Endothelial cell of umbilical vein (primary cell): ENCODE measurements at regions of chr7 and their contacts with region 1.

Region 1: DNA sequence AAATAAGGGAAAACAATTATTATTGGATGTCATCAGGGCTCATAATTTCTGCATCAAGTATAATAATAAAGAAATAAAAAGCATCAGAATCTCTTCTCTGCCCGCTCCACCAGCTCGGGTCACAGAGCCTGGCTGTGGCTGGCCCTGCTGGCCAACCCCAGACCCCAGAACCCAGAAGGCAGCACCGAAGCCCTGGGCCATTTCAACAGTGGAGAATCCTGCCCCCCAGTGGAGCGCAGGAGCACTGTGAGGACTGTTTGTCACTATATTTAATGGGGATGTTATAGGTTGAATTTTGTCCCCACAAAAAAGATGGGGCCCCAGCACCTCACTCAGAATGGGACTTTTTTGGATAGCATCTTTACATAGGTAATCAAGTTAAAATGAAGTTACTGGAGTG is 27.3 kb downstream of the DENND11 start:
- DNase-seq: no peak
- H3K4me3 ChIP-seq: peak overlapping the region in 1 of 3 experiments; percentile 34
- H3K27ac ChIP-seq: peak overlapping the region; percentile 99
- H3K4me1 ChIP-seq: peaks cover 32% of the 10 kb centered on the region
- H3K27me3 ChIP-seq: no peaks in the 10 kb centered on the region
- CTCF ChIP-seq: peak; percentile 66 to 70
- POLR2A ChIP-seq: no peak

Region 2: GRCh38 chr7:140049339-140050024 is 1625.2 kb before region 1 on chr7:
- CTCF ChIA-PET with region 1: no interaction called
- POLR2A ChIA-PET with region 1: no interaction called
- dilution Hi-C with region 1: no loop called
- intact Hi-C with region 1: loop called (anchors 10 kb)
- DNase-seq: peak; percentile 88
- H3K4me3 ChIP-seq: no peak overlapping the region
- H3K27ac ChIP-seq: peak overlapping the region; percentile 72
- H3K4me1 ChIP-seq: peaks cover 24% of the 10 kb centered on the region
- H3K27me3 ChIP-seq: no peaks in the 10 kb centered on the region
- CTCF ChIP-seq: no peak
- POLR2A ChIP-seq: no peak

Region 3: DNA sequence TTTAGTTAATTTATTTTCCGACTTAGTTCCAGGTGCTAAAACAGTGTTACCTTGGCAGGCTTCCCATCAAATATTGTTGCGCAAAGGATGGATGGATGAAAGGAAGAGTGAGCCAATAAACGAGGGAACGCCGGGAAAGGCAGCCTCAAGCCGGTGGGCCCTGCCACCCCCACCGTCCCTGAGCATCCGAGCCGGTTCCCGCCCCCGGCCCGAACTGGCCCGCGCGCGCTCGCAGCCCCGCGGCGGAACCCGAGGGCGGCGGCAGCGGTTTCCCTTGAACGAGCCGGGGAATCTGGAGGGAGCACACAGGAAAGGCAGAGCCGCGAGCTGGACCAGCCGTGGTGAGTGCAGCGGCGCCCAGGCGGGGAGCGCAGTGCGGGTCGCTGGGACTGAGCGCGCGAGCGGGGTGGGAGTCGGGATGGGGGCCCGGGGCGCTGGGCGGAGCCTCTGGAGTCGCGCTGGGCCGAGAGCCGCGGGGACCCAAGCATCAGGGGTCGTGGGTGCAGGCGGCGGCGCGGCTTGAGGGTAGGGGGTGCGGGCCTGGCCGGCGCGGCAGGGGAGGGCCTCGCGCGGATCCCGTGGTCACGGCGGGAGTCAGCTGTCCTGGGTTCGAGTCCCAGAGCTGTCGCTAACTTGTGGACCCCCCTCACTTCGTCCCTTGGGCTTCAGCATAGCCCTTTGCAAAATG is 123.5 kb before region 1 on chr7 and contains the start of gene AGK:
- CTCF ChIA-PET with region 1: interaction called, 3 read pairs
- POLR2A ChIA-PET with region 1: no interaction called
- dilution Hi-C with region 1: no loop called
- intact Hi-C with region 1: loop called (anchors 1 kb)
- DNase-seq: peak; percentile 75
- H3K4me3 ChIP-seq: peak within 1 kb of the TSS; percentile 60 to 97 (median 82)
- H3K27ac ChIP-seq: peak within 1 kb of the TSS; percentile 38
- H3K4me1 ChIP-seq: peaks cover 13% of the 10 kb centered on the region
- H3K27me3 ChIP-seq: no peaks in the 10 kb centered on the region
- CTCF ChIP-seq: no peak
- POLR2A ChIP-seq: peak; percentile 79
- total RNA-seq, gene AGK: 33.9 and 34.3 TPM in 2 replicates

Region 4: GRCh38 chr7:141663081-141663849 is 11.4 kb before region 1 on chr7:
- CTCF ChIA-PET with region 1: interaction called, 16 read pairs
- POLR2A ChIA-PET with region 1: no interaction called
- dilution Hi-C with region 1: no loop called
- intact Hi-C with region 1: loop called (anchors 1 kb)
- DNase-seq: peak; percentile 90
- H3K4me3 ChIP-seq: no peak overlapping the region
- H3K27ac ChIP-seq: peak overlapping the region; percentile 76
- H3K4me1 ChIP-seq: peaks cover 24% of the 10 kb centered on the region
- H3K27me3 ChIP-seq: no peaks in the 10 kb centered on the region
- CTCF ChIP-seq: no peak
- POLR2A ChIP-seq: peak; percentile 17

Region 5: DNA sequence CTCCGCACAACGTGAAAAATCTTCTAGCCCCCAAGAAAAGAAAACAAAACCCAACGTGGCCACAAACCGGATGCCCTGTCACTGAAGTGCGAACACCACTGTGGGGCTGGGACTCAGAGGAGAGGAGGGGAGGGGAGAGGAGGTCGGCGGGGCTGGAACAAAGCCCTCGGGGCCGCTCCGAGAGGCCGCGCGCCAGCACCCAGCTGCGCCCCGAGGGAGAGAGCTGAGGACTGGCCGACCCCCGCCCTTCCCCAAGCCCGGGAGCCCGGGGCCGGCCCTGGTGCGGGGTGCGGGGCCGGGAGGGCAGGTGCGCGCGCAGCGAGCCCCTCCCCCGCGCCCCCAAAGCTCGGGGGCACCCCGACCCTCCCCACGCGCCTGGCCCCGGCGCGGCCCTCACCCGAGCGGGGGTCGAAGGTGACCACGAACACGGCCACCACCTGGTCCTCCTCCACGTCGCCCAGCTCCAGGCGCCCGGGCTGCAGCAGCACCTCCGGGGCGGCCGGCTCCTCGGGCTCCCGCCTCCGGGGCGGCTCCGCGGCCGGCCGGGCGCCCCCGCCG is 26.9 kb after region 1 on chr7:
- CTCF ChIA-PET with region 1: interaction called, 8 read pairs
- POLR2A ChIA-PET with region 1: no interaction called
- dilution Hi-C with region 1: no loop called
- intact Hi-C with region 1: loop called (anchors 1 kb)
- DNase-seq: peak; percentile 43
- H3K4me3 ChIP-seq: peak overlapping the region; percentile 63 to 92 (median 84)
- H3K27ac ChIP-seq: peak overlapping the region; percentile 16
- H3K4me1 ChIP-seq: peaks cover 10% of the 10 kb centered on the region
- H3K27me3 ChIP-seq: peaks cover 5 to 15% of the 10 kb centered on the region in 2 experiments
- CTCF ChIP-seq: no peak
- POLR2A ChIP-seq: no peak

Region 6: GRCh38 chr7:141737834-141738591 is 63.3 kb after region 1 on chr7 and contains the start of gene SSBP1:
- CTCF ChIA-PET with region 1: interaction called, 8 read pairs
- POLR2A ChIA-PET with region 1: interaction called, 3 read pairs
- dilution Hi-C with region 1: no loop called
- intact Hi-C with region 1: loop called (anchors 1 kb)
- DNase-seq: peak; percentile 99
- H3K4me3 ChIP-seq: peak within 1 kb of the TSS; percentile 74 to 99 (median 96)
- H3K27ac ChIP-seq: peak within 1 kb of the TSS; percentile 92
- H3K4me1 ChIP-seq: peaks cover 16% of the 10 kb centered on the region
- H3K27me3 ChIP-seq: no peaks in the 10 kb centered on the region
- CTCF ChIP-seq: peak; percentile 76 to 86
- POLR2A ChIP-seq: peak; percentile 89
- total RNA-seq, gene SSBP1: 164 and 169 TPM in 2 replicates

Region 7: DNA sequence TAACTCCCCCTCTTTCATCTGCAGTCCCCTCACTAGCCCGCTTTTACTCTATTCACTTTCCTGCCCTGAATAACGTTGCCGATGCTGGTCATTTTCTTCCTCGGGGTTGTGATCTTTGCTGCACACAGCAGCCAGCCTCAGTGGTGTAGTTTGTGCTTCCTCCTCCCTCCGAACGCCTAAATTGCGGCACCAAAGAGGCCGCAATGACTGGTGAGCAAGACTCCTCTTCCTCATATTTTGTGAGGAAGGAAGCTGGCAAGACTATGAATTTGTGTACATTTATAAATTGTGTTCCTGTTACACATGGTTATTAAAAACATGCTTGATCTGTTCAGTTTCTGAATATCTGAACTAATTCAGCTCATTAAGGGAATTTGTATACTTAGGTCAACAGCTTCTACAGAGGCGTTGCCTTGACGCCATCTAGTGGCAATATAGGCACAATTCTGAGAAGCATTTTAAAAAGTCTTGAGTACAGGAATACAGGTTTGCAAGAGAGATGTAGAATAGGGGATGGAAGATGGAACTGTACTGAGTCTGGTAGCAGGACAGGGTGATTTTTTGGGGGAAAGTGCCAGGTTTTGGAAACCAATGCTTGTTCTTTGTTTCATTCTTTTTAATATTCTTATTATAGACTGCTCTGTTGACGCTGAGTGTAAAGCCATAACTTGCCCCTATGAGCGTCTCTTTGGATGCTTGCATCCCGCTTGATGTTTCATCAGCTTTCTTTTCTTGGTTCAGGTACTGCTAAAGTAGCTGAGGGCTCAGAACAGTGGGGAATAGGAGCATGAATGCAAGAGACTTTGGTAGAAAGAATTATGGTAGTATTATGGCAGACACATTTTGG is 111.2 kb after region 1 on chr7:
- CTCF ChIA-PET with region 1: interaction called, 9 read pairs
- POLR2A ChIA-PET with region 1: no interaction called
- dilution Hi-C with region 1: no loop called
- intact Hi-C with region 1: loop called (anchors 1 kb)
- DNase-seq: peak; percentile 71
- H3K4me3 ChIP-seq: no peak overlapping the region
- H3K27ac ChIP-seq: no peak overlapping the region
- H3K4me1 ChIP-seq: peaks cover 21% of the 10 kb centered on the region
- H3K27me3 ChIP-seq: no peaks in the 10 kb centered on the region
- CTCF ChIP-seq: peak; percentile 66 to 72
- POLR2A ChIP-seq: no peak